T-cell (primary cell): ENCODE measurements at regions of chr16 and their contacts with region 1.

Region 1: DNA sequence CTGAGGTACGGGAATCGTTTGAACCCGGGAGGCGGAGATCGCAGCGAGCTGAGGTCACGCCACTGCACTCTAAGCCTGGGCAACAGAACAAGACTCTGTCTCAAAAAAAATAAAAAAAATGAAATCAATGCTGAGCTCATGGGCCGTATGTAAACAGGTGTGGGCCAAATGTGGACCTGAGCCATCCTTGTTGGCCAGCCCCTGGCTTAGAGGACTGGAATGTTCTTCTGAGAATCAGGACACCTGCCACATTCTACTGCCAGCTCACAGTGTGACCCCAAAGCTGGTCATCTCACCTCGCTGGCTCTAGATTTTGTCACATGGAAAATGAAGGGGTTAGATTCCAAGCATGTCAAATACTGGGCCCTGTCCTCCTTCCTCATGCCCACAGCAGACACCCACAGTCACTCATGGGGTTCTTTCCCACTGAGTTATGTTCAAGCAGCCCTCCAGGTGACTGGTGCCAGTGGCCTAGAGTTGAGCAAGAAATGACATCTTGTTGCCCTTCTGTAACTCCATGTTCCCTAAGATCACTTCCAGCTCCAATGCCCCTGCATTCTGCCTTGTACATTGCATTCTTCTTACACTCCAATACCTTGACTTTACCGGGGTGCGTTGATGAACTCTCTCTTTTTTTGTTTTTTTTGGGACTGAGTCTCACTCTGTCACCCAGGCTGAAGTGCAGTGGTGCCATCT is 110.6 kb downstream of the ABCC1 start:
- DNase-seq: no peak
- ATAC-seq: no peak
- H3K4me3 ChIP-seq: no peak overlapping the region
- H3K4me3 Mint-ChIP-seq: no peak overlapping the region
- H3K27ac ChIP-seq: no peak overlapping the region
- H3K27ac Mint-ChIP-seq: no peak overlapping the region
- H3K4me1 ChIP-seq: peaks cover 9 to 22% of the 10 kb centered on the region in 2 experiments
- H3K4me1 Mint-ChIP-seq: peaks cover 18 to 31% (median 26%) of the 10 kb centered on the region in 3 donors
- H3K27me3 ChIP-seq: no peaks in the 10 kb centered on the region
- H3K27me3 Mint-ChIP-seq: no peaks in the 10 kb centered on the region

Region 2: GRCh38 chr16:16042076-16042475 is 18.0 kb before region 1 on chr16:
- CTCF ChIA-PET with region 1: no interaction called
- POLR2A ChIA-PET with region 1: interaction called in 1 of 2 experiments, 11 read pairs
- DNase-seq: no peak
- ATAC-seq: no peak
- H3K4me3 ChIP-seq: no peak overlapping the region
- H3K4me3 Mint-ChIP-seq: peak overlapping the region in 1 of 3 donors; percentile 54
- H3K27ac ChIP-seq: no peak overlapping the region
- H3K27ac Mint-ChIP-seq: no peak overlapping the region
- H3K4me1 ChIP-seq: peaks cover 0 to 26% of the 10 kb centered on the region in 2 experiments
- H3K4me1 Mint-ChIP-seq: peaks cover 22 to 39% (median 23%) of the 10 kb centered on the region in 3 donors
- H3K27me3 ChIP-seq: no peaks in the 10 kb centered on the region
- H3K27me3 Mint-ChIP-seq: no peaks in the 10 kb centered on the region